ENCODE measurements at regions of chr17 and their contacts with region 1.

Region 1: GRCh38 chr17:82236142-82236981 is 7.5 kb downstream of the SLC16A3 start:
- DNase-seq: peak in 4 of 5 donors; percentile 64 to 81 (median 72)
- ATAC-seq: peak in 3 of 4 donors; percentile 3 to 8 (median 6)
- H3K4me3 ChIP-seq: no peak overlapping the region
- H3K27ac ChIP-seq: peak overlapping the region in 2 of 12 donors; percentile 27 to 86
- H3K4me1 ChIP-seq: peaks cover 37 to 91% (median 63%) of the 10 kb centered on the region in 12 donors
- H3K27me3 ChIP-seq: no peaks in the 10 kb centered on the region
- CTCF ChIP-seq: peak; percentile 82 to 90 (median 86)
- POLR2A ChIP-seq: no peak

Region 2: DNA sequence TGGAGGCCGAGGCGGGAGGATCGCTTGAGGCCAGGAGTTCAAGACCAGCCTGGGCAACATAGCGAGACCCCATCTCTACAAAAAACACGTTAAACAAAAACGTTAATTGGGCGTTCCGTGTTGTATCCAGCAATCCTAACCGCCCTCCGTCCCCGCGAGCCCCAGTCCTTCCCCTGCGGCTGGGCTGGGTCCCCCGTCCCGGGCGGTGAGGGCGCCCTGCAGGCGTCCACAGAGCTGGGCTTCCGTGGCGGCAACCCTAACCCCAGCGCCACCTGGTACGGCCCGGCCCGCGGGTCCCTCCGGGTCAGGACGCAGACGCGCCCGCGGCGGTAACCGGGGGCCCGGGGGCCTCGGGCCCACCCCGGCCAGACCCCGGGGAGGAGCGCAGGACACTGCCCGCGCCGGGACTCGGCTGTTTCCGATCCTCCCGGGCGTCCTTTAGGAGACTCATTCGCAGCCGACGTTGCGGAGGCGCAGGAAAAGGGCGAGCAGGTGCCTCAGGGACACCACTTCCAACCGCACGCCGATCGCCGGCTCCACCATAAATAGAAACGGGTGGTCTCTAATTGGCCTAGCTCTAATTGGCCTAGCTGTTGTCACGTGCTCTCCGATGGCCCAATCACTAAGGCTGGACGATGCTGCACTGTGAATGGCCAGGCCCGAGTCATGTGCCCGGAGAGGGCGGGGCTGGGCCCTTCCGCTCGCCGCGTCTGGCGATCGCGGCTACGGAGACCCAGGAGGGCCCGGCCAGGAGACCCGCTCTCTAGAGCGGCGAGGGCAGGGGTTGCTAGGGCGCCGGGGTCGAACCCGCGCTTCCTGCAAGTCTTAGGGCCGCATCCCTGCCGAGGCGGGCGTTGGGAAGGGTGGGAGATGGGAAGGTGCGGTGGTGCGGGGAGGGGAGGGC is 56.1 kb after region 1 on chr17:
- intact Hi-C with region 1: loop called in 5 of 10 experiments (anchors 5 to 10 kb)
- DNase-seq: peak; percentile 97 to 99 (median 97)
- ATAC-seq: peak; percentile 94 to 97 (median 95)
- H3K4me3 ChIP-seq: peak overlapping the region; percentile 68 to 98 (median 76)
- H3K27ac ChIP-seq: peak overlapping the region; percentile 91 to 99 (median 95)
- H3K4me1 ChIP-seq: peaks cover 7 to 55% (median 34%) of the 10 kb centered on the region in 12 donors
- H3K27me3 ChIP-seq: no peaks in the 10 kb centered on the region
- CTCF ChIP-seq: no peak
- POLR2A ChIP-seq: peak; percentile 90 to 97